Activated T-helper 2 cell treated with anti-CD3 and anti-CD28 coated beads, Interferon-gamma antibody, Interleukin-2, Interleukin-4, amounts not matched to agents 10 μg/mL and 5 μg/mL and 100 μg/mL, durations not matched to agents 14 hours and 24 hours and 36 hours (primary cell): ENCODE measurements at regions of chr7 and their contacts with region 1.

Region 1: GRCh38 chr7:139075031-139075652 is 34.4 kb downstream of the ZC3HAV1 start:
- DNase-seq: peak; percentile 57
- H3K4me3 Mint-ChIP-seq: peak overlapping the region; percentile 13
- H3K27ac Mint-ChIP-seq: peak overlapping the region; percentile 78
- H3K4me1 Mint-ChIP-seq: peaks cover 52% of the 10 kb centered on the region
- H3K27me3 Mint-ChIP-seq: no peaks in the 10 kb centered on the region

Region 2: DNA sequence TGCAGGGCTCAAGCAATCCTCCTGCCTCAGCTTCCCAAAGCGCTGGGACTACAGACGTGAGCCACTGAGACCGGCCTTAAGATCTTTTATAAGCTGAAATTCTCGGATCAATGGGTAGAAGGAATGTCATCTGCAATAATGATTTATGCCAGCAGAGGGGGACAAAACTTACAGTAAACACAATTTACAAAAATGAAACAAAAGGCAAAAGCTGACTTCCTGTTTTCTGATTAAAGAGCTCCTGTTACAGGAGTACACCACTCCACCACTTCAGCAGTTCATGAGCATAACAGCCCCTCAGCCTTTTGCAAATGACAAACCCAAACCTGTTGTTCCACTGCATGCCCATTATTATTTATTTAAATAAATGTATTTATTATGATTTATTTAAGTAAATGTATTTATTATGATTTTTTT is 188.6 kb before region 1 on chr7:
- intact Hi-C with region 1: loop called (anchors 1 kb)
- DNase-seq: peak; percentile 24
- H3K4me3 Mint-ChIP-seq: no peak overlapping the region
- H3K27ac Mint-ChIP-seq: peak overlapping the region; percentile 30
- H3K4me1 Mint-ChIP-seq: peaks cover 20% of the 10 kb centered on the region
- H3K27me3 Mint-ChIP-seq: peaks cover 2% of the 10 kb centered on the region

Region 3: DNA sequence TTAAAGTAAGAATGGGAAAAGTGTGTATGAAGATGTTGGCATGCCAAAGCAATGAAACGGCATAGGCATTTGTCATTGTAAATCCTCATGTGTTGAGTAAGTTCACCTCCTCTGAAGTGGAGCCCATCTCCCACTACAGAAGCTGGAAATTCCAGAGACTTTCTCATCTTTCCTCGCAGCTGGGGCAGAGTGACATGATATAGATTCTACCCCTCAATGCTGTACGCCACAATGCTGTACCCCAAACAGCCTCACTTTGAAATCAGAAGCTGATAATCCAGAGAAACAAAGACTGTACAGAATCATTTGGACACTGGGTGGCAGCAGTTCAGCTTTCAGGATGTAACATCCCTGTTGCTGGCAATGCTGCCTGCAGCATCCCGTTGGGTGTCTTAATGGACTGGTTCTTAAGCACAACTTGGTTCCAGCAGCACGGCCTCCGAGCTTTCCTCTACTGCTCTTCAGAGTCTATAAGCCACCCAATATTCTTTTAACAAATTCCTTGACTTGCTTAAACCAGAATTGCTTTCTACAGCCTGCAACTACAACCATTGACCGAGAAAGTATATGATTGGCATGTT is 58.1 kb before region 1 on chr7:
- intact Hi-C with region 1: loop called (anchors 1 kb)
- DNase-seq: peak; percentile 47
- H3K4me3 Mint-ChIP-seq: no peak overlapping the region
- H3K27ac Mint-ChIP-seq: no peak overlapping the region
- H3K4me1 Mint-ChIP-seq: peaks cover 13% of the 10 kb centered on the region
- H3K27me3 Mint-ChIP-seq: peaks cover 15% of the 10 kb centered on the region

Region 4: DNA sequence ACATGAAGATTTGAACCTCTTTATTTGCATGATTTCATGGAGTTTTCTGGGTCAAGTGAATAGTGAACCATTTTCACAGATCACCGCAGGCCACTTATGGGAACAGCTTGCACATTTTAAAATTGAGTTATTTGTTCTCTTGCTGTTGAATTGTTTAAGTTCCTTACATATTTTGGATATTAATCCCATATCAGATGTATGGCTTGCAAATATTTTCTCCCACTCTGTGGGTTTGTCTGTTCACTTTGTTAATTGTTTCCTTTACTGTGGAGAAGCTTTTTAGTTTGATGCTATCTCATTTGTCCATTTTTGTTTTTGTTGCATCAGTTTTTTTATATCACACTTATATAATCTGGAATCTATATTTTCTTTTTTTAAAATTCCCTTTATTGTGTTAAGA is 25.2 kb before region 1 on chr7:
- intact Hi-C with region 1: no loop called
- DNase-seq: no peak
- H3K4me3 Mint-ChIP-seq: no peak overlapping the region
- H3K27ac Mint-ChIP-seq: no peak overlapping the region
- H3K4me1 Mint-ChIP-seq: peaks cover 62% of the 10 kb centered on the region
- H3K27me3 Mint-ChIP-seq: no peaks in the 10 kb centered on the region

Region 5: DNA sequence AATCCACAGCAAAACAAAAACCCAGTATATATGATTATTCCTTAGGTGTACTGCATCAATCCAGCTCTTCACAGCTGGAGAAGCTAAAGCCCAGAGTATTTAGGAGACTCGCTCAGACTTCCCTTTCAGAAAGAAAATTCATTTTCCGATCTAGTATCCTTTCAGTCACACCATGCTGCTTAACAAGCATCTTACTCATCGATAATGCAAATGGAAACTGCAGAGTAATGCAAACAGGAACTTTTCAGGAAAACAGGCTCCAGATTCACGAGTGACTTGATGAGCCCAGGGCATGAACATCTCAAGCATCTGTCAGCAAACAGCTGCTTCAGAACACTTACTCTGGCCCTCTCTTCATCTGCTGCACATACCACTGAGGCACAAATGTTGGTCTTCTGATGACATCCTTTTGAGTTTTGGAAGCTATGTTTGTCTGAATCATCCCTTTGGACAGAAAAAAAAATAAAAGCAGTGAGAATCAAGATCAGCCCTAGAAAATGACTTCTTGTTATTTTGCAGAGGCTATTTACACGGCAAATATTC is 14.4 kb before region 1 on chr7:
- intact Hi-C with region 1: loop called (anchors 2 kb)
- DNase-seq: no peak
- H3K4me3 Mint-ChIP-seq: no peak overlapping the region
- H3K27ac Mint-ChIP-seq: peak overlapping the region; percentile 58
- H3K4me1 Mint-ChIP-seq: peaks cover 59% of the 10 kb centered on the region
- H3K27me3 Mint-ChIP-seq: no peaks in the 10 kb centered on the region

Region 6: GRCh38 chr7:139118234-139118804 is 43.2 kb after region 1 on chr7:
- intact Hi-C with region 1: loop called (anchors 5 kb)
- DNase-seq: no peak
- H3K4me3 Mint-ChIP-seq: peak overlapping the region; percentile 44
- H3K27ac Mint-ChIP-seq: peak overlapping the region; percentile 74
- H3K4me1 Mint-ChIP-seq: peaks cover 26% of the 10 kb centered on the region
- H3K27me3 Mint-ChIP-seq: no peaks in the 10 kb centered on the region